Calu3 (cell line): ENCODE measurements at regions of chr15 and their contacts with region 1.

Region 1: DNA sequence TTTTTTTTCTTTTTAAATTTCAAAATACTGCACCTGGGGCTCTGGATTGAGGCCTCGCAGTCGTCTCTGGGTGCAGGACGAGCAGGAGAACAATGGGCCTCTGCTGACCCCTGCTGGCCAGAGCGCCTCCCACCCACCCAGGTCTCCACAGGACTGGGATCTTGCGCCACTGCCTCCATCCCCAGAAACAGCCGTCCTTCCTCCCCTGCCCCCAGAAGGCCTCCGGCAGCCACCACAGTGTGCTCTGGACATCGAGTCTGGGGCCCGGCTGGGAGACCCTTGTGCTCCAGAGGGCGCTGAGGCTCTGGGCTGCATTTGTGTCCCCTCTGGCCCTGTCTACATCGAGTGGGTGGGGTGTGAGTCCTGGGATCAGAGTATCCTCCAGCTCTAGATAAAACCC is 6.6 kb upstream of the ACSBG1 start:
- DNase-seq: peak; percentile 95
- H3K4me3 Mint-ChIP-seq: no peak overlapping the region
- H3K27ac Mint-ChIP-seq: no peak overlapping the region
- H3K4me1 Mint-ChIP-seq: peaks cover 9% of the 10 kb centered on the region
- H3K27me3 Mint-ChIP-seq: peaks cover 19% of the 10 kb centered on the region
- CTCF ChIP-seq: peak; percentile 92

Region 2: DNA sequence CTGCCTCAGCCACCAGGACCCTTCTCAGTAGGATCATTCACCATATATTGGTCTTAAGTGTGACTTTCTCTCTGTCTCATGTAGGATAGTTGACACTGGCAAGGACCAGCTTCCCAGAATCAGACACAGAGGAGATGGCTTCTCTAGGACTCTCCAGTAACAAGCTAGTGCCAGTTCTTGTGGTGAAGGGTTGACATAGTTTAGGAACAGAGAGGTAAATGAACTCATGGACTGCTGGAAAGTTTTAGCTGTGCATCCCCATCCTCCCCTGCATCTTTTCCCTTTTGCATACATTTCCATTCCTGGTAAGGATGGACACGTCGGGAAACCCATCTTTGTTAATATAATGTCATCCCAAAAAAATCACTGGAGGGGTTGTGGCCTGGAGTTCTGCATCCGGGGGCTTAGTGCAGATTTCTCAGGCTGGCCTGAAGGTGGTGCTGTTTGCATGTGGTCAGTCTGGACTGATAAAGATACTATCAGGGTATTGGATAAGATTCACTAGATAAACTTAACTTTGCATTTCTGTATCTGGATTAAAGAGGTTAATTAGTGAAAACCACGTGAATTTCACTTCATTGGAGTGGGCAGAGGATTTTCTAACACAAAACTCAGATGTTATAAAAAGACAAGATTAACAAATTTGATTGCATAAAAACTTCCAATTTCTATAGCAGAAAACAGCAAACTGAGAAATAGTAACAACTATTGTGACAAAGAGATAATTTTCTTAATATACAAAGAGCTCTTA is 274.3 kb before region 1 on chr15:
- CTCF ChIA-PET with region 1: no interaction called
- intact Hi-C with region 1: loop called (anchors 5 kb)
- DNase-seq: peak; percentile 77
- H3K4me3 Mint-ChIP-seq: no peak overlapping the region
- H3K27ac Mint-ChIP-seq: no peak overlapping the region
- H3K4me1 Mint-ChIP-seq: peaks cover 12% of the 10 kb centered on the region
- H3K27me3 Mint-ChIP-seq: peaks cover 22% of the 10 kb centered on the region
- CTCF ChIP-seq: peak; percentile 80

Region 3: DNA sequence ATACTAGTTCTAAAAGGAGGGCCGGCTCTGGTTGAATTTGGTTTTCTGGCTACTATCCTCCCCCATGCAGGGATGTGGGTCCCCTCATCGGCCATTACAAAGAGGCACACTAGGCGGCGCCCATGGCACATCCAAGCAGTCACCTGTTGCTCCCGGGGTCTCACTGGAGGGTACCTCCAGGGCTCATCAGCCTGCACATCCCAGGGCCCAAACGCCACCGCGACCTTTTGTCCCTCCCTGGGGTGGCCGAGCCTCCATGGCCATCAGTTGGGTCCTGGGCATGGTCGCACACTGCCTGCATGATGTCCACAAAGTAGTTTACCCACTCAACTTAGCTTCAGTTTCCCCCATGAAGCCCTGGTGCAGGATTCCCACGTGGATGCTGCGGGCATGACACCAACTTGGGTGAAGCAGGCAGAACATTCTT is 63.5 kb before region 1 on chr15:
- CTCF ChIA-PET with region 1: interaction called, 18 read pairs
- intact Hi-C with region 1: loop called (anchors 1 kb)
- DNase-seq: peak; percentile 72
- H3K4me3 Mint-ChIP-seq: no peak overlapping the region
- H3K27ac Mint-ChIP-seq: no peak overlapping the region
- H3K4me1 Mint-ChIP-seq: no peaks in the 10 kb centered on the region
- H3K27me3 Mint-ChIP-seq: no peaks in the 10 kb centered on the region
- CTCF ChIP-seq: peak; percentile 93

Region 4: DNA sequence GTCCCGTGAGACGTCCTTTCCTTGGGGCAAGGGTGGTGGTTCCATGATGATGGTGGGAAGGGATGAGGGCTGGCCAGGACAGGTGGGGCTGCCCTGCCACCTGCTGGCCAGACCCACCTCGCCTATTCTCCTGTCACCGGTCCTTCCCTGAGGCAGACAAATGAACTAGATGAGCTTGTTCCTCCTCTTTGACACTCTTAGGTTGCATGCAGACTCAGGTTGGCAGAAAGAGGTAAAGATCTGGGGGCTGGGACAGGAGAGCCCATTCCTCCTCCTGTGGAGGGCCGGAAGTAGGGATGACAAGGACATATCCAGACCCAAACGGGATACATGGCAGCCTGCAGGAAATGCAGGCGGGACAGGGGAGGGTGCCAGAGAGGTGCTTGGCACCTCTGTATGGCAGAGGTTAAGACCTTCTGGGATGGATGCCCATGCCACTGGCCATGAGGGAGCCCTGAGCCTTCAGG is 45.2 kb before region 1 on chr15:
- CTCF ChIA-PET with region 1: interaction called, 22 read pairs
- intact Hi-C with region 1: loop called (anchors 5 kb)
- DNase-seq: peak; percentile 72
- H3K4me3 Mint-ChIP-seq: no peak overlapping the region
- H3K27ac Mint-ChIP-seq: no peak overlapping the region
- H3K4me1 Mint-ChIP-seq: no peaks in the 10 kb centered on the region
- H3K27me3 Mint-ChIP-seq: peaks cover 38% of the 10 kb centered on the region
- CTCF ChIP-seq: peak; percentile 90

Region 5: GRCh38 chr15:78212546-78213424 is 28.2 kb before region 1 on chr15:
- CTCF ChIA-PET with region 1: no interaction called
- intact Hi-C with region 1: no loop called
- DNase-seq: peak; percentile 88
- H3K4me3 Mint-ChIP-seq: no peak overlapping the region
- H3K27ac Mint-ChIP-seq: peak overlapping the region; percentile 33
- H3K4me1 Mint-ChIP-seq: peaks cover 75% of the 10 kb centered on the region
- H3K27me3 Mint-ChIP-seq: no peaks in the 10 kb centered on the region
- CTCF ChIP-seq: no peak